Activated CD4-positive, alpha-beta memory T cell treated with anti-CD3 and anti-CD28 coated beads for 36 hours (primary cell): ENCODE measurements at regions of chr20 and their contacts with region 1.

Region 1: DNA sequence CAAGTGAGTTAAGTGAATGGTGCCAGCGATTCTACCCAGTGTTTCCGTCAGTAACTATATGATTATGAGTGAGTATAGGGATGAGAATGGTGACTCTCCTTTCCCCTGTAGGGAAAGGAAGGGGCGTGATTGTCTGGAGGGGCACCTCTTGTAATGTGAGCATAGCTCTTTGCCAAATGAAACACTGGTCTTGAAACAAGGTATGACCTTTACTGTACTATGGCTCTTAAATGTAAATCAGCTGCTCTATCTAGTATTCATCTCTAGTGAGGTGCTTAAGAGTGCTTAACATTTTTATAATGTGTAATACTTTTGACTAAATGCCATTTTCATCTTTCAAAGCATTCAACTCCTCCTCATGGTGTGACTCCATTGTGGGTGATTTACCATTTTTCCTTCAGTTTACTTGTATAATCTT is 11.0 kb downstream of the PANK2 start:
- DNase-seq: peak; percentile 14
- H3K4me3 Mint-ChIP-seq: no peak overlapping the region
- H3K27ac Mint-ChIP-seq: peak overlapping the region; percentile 68
- H3K4me1 Mint-ChIP-seq: peaks cover 77% of the 10 kb centered on the region
- H3K27me3 Mint-ChIP-seq: no peaks in the 10 kb centered on the region

Region 2: GRCh38 chr20:3888622-3889488 is 11.3 kb before region 1 on chr20 and contains the start of gene PANK2:
- CTCF ChIA-PET with region 1: interaction called, 5 read pairs
- POLR2A ChIA-PET with region 1: interaction called, 3 read pairs
- intact Hi-C with region 1: loop called (anchors 1 kb)
- DNase-seq: peak; percentile 99
- H3K4me3 Mint-ChIP-seq: peak within 1 kb of the TSS; percentile 92
- H3K27ac Mint-ChIP-seq: peak within 1 kb of the TSS; percentile 97
- H3K4me1 Mint-ChIP-seq: peaks cover 40% of the 10 kb centered on the region
- H3K27me3 Mint-ChIP-seq: no peaks in the 10 kb centered on the region
- total RNA-seq, gene PANK2: 49.3 to 52.5 TPM